ENCODE measurements at regions of chr15 and their contacts with region 1.

Region 1: DNA sequence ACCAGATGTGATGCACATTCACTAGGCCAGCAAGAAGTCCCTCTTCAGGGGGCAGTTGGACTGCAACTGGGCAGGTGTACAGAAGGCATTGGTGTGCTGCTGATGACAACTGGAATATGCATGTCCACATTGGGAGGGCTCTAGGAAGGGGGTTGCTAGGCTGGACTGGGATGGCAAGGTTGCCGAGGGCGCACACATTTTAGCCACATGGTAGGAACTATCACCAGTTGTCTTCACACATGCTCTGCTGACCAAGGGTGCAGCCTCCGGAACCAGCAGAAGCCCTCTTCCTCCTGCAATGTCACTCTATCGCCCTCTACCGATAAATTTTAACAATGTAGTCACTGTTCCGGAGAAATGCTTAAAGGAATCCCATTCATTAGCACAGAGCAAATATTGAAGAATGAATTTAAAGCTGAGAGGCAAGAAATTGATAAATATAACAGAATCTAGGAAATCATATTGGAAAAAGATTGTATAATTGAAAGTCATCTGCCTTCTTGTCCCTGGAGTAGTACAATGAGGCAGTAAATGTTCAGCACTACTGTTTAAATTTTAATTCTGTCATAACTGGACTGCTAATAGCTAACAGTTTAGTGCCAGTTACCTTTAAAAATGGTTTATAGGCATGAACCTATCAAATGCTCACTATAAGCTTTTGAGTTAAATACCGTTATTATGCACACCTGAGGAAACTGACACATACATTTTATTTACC is 22.6 kb upstream of the LYSMD4 start:
- DNase-seq: peak in 16 of 35 experiments; percentile 8 to 77 (median 20)
- ATAC-seq: peak; percentile 77 to 87 (median 82)
- H3K4me3 ChIP-seq: no peak overlapping the region
- H3K4me3 Mint-ChIP-seq: no peak overlapping the region
- H3K27ac ChIP-seq: no peak overlapping the region
- H3K27ac Mint-ChIP-seq: no peak overlapping the region
- H3K4me1 ChIP-seq: peaks cover 0 to 4% of the 10 kb centered on the region in 2 experiments
- H3K4me1 Mint-ChIP-seq: peaks cover 0 to 15% (median 5%) of the 10 kb centered on the region in 3 donors
- H3K27me3 ChIP-seq: no peaks in the 10 kb centered on the region
- H3K27me3 Mint-ChIP-seq: no peaks in the 10 kb centered on the region

Region 2: GRCh38 chr15:99275525-99276128 is 480.2 kb before region 1 on chr15:
- CTCF ChIA-PET with region 1: interaction called, 29 to 34 read pairs
- POLR2A ChIA-PET with region 1: interaction called in 1 of 2 experiments, 3 read pairs
- DNase-seq: no peak
- ATAC-seq: no peak
- H3K4me3 ChIP-seq: no peak overlapping the region
- H3K4me3 Mint-ChIP-seq: no peak overlapping the region
- H3K27ac ChIP-seq: no peak overlapping the region
- H3K27ac Mint-ChIP-seq: no peak overlapping the region
- H3K4me1 ChIP-seq: no peaks in the 10 kb centered on the region
- H3K4me1 Mint-ChIP-seq: peaks cover 19 to 26% (median 19%) of the 10 kb centered on the region in 3 donors
- H3K27me3 ChIP-seq: no peaks in the 10 kb centered on the region
- H3K27me3 Mint-ChIP-seq: no peaks in the 10 kb centered on the region

Region 3: DNA sequence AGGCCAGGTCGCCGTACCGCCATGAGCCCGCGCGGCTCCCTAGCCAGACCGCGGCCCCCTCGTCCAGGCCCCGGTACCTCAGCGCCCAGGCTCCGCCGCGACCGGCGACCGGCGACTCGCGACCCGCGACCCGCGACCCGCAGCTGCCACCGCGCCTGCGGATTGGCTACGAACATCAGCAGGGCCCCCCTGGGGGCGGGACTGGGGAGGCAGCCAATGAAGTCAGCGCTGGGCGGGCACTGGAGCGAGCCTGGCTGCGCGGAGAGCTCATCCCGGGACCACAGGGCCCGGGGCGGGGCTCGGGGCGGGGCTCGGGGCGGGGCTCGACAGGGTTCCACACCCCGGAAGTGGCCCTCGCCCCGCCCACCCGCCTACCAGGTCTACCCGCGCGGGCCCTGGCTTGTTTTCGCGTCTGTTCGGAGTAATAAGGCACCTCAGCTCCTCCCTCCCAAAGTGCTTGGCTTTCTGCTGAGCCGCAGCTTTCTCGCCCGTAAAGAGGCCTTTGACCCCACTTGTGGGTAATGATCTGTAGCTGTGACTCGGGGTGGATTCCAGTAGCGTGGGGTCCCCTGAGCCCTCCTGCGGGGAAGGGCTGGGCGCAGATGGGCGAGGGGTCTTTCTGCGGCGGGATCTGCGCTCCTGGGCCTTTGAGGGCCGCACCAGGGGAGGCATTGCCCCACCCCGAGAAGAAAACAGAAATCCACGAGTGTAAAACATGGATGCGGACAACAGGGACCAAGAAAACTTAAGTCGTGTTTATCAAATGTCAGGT is 22.4 kb before region 1 on chr15 and contains the start of gene LYSMD4:
- CTCF ChIA-PET with region 1: interaction called in 1 of 2 experiments, 11 read pairs
- POLR2A ChIA-PET with region 1: interaction called in 1 of 2 experiments, 8 read pairs
- DNase-seq: peak; percentile 95 to 99 (median 98)
- ATAC-seq: peak; percentile 98 to 100 (median 98)
- H3K4me3 ChIP-seq: peak within 1 kb of the TSS; percentile 71 to 86
- H3K4me3 Mint-ChIP-seq: peak within 1 kb of the TSS; percentile 82 to 85 (median 83)
- H3K27ac ChIP-seq: peak within 1 kb of the TSS; percentile 84
- H3K27ac Mint-ChIP-seq: peak within 1 kb of the TSS; percentile 91 to 96
- H3K4me1 ChIP-seq: peaks cover 2 to 21% of the 10 kb centered on the region in 2 experiments
- H3K4me1 Mint-ChIP-seq: peaks cover 20 to 27% (median 25%) of the 10 kb centered on the region in 3 donors
- H3K27me3 ChIP-seq: no peaks in the 10 kb centered on the region
- H3K27me3 Mint-ChIP-seq: no peaks in the 10 kb centered on the region
- total RNA-seq, gene LYSMD4: 12.6 to 26.5 (median 17.6) TPM

Region 4: DNA sequence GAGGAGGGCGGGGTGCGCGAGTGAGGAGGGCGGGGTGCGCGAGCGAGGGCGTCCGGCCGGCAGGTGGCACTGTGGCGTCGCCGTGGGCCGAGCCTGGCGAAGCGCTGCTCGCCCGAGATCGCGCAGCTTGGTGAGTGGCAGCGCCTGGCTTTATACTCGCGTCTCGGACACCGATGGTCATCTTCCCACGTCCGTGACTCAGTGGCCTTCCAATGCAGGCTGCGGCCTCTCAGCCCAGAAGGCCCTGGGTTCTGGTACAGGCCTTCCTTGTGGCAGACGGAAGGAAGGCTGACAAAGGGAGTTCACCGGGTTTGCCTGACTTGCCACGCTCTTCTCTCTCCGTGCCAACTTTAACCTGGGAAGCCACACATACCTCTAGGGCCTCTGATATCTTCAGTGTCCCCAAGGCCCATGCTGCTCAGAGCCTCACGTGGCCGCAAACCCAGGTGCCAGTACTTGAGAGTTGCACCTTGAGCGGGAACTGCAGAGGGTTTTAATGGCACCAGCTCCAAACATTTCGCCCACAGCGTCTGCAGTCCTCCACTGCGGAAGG is 172.7 kb after region 1 on chr15:
- CTCF ChIA-PET with region 1: no interaction called
- POLR2A ChIA-PET with region 1: no interaction called
- DNase-seq: peak; percentile 67 to 96 (median 82)
- ATAC-seq: peak; percentile 87 to 92 (median 89)
- H3K4me3 ChIP-seq: peak overlapping the region; percentile 58 to 62
- H3K4me3 Mint-ChIP-seq: peak overlapping the region; percentile 75 to 86 (median 80)
- H3K27ac ChIP-seq: peak overlapping the region; percentile 56
- H3K27ac Mint-ChIP-seq: peak overlapping the region; percentile 92 to 93
- H3K4me1 ChIP-seq: peaks cover 8 to 20% of the 10 kb centered on the region in 2 experiments
- H3K4me1 Mint-ChIP-seq: peaks cover 21 to 24% (median 23%) of the 10 kb centered on the region in 3 donors
- H3K27me3 ChIP-seq: peaks cover 3 to 4% of the 10 kb centered on the region in 2 experiments
- H3K27me3 Mint-ChIP-seq: peaks cover 0 to 9% of the 10 kb centered on the region in 2 donors

Measured in T-cell (primary cell).